Mammary epithelial cell (primary cell): ENCODE measurements at regions of chr9 and their contacts with region 1.

Region 1: GRCh38 chr9:69932901-69933300 is 110.7 kb upstream of the MAMDC2 start:
- DNase-seq: no peak
- H3K4me3 ChIP-seq: no peak overlapping the region
- H3K27ac ChIP-seq: no peak overlapping the region
- H3K4me1 ChIP-seq: peaks cover 10% of the 10 kb centered on the region
- H3K27me3 ChIP-seq: no peaks in the 10 kb centered on the region
- CTCF ChIP-seq: peak; percentile 35 to 50

Region 2: DNA sequence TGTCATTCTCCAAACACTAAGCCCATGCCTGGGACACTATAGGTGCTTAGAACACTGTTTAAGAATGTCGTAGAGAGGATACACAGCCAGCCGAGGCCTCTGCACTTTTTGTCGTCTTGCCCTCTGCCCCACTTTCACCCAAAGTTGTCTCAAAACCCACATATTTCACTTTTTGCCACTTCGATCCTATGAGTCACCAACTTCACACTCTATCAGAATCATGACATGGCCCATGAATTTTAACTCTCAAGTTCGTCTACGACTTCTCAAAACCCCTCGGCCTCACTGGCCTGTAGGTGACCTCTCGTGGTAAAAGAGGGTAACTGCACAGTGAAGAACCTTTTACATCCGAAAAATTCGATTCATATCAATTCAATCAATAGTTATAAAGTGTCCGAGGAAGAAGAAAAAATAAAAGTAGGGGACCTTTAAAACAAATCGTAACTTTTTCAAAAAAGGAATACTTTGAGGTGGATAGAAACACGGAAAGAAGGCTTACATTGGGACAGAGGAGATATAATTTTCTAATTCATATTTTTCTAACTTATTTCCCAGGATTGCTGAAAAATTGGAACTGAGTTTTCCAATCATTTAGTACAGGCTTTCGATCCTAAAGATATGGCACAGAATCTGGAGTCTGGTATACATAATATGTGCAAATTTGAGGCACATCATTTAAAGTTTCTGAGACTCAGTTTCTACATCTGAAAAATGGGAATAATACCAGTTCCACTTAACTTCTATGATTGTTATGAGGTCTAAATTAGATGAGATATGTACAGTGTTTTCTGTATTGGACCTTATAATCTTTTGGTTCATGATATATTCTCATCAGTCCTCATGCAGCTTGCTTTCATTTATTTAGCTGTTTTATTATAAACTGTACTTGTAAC is 383.3 kb before region 1 on chr9:
- CTCF ChIA-PET with region 1: no interaction called
- dilution Hi-C with region 1: no loop called
- in situ Hi-C with region 1: no loop called
- intact Hi-C with region 1: loop called (anchors 5 kb)
- DNase-seq: no peak
- H3K4me3 ChIP-seq: no peak overlapping the region
- H3K27ac ChIP-seq: no peak overlapping the region
- H3K4me1 ChIP-seq: no peaks in the 10 kb centered on the region
- H3K27me3 ChIP-seq: peaks cover 12% of the 10 kb centered on the region
- CTCF ChIP-seq: peak; percentile 72 to 80

Region 3: GRCh38 chr9:69672596-69673310 is 260.1 kb before region 1 on chr9:
- CTCF ChIA-PET with region 1: no interaction called
- dilution Hi-C with region 1: no loop called
- in situ Hi-C with region 1: no loop called
- intact Hi-C with region 1: loop called (anchors 5 kb)
- DNase-seq: peak; percentile 79
- H3K4me3 ChIP-seq: peak overlapping the region; percentile 47 to 71 (median 69)
- H3K27ac ChIP-seq: no peak overlapping the region
- H3K4me1 ChIP-seq: peaks cover 33% of the 10 kb centered on the region
- H3K27me3 ChIP-seq: no peaks in the 10 kb centered on the region
- CTCF ChIP-seq: peak; percentile 70 to 85

Region 4: DNA sequence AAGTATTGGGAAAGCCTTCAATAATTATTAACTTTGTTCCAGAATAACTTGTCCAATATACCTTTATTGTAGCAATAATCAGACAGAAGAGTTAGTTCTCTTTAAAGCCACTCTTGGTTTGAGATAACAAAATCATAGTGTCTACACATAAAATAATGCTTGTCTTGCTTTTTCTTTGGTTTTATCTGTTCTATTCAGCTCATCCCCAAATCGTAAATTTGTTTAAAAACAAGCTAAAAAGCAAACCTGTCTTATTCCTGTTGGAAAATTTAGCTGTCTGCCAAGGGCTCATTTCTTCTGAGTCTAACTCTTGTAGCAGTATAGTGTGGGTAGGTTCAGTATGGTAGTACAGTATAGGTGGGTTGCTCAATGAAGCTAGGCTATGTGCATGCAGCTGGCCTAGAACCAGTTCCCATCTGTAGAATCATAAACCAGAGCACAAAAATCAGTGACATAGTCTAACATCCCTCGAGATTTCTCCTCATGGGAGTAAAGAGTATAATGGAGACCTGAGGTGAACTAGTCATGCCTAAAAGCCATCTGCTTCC is 242.8 kb before region 1 on chr9:
- CTCF ChIA-PET with region 1: no interaction called
- dilution Hi-C with region 1: no loop called
- in situ Hi-C with region 1: no loop called
- intact Hi-C with region 1: no loop called
- DNase-seq: no peak
- H3K4me3 ChIP-seq: no peak overlapping the region
- H3K27ac ChIP-seq: no peak overlapping the region
- H3K4me1 ChIP-seq: no peaks in the 10 kb centered on the region
- H3K27me3 ChIP-seq: no peaks in the 10 kb centered on the region
- CTCF ChIP-seq: no peak

Region 5: GRCh38 chr9:69809304-69809863 is 123.5 kb before region 1 on chr9:
- CTCF ChIA-PET with region 1: interaction called, 5 read pairs
- dilution Hi-C with region 1: no loop called
- in situ Hi-C with region 1: loop called in 1 of 2 experiments (anchors 10 kb)
- intact Hi-C with region 1: loop called (anchors 1 kb)
- DNase-seq: peak; percentile 17
- H3K4me3 ChIP-seq: no peak overlapping the region
- H3K27ac ChIP-seq: no peak overlapping the region
- H3K4me1 ChIP-seq: no peaks in the 10 kb centered on the region
- H3K27me3 ChIP-seq: no peaks in the 10 kb centered on the region
- CTCF ChIP-seq: peak; percentile 38 to 41

Region 6: DNA sequence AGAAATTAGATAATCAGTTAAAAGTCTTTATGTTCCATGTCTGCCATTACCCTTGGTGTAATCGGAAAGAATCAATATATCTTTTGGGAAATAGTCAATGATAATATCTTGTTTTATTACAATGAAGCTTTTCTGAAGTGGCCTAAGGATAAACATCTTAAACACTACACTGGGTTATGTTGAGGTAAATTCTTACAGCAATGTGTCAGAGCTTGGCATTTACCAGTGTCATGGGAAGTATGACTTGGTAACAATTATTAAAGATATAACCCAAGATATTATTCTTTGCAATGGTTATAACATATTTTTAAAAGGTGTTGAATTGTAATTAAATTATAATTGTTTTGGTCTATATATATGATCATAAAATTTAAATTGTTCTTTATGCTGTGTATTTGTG is 27.6 kb before region 1 on chr9:
- CTCF ChIA-PET with region 1: no interaction called
- dilution Hi-C with region 1: no loop called
- in situ Hi-C with region 1: no loop called
- intact Hi-C with region 1: no loop called
- DNase-seq: peak; percentile 45
- H3K4me3 ChIP-seq: no peak overlapping the region
- H3K27ac ChIP-seq: peak overlapping the region; percentile 22
- H3K4me1 ChIP-seq: peaks cover 14% of the 10 kb centered on the region
- H3K27me3 ChIP-seq: no peaks in the 10 kb centered on the region
- CTCF ChIP-seq: no peak

Region 7: DNA sequence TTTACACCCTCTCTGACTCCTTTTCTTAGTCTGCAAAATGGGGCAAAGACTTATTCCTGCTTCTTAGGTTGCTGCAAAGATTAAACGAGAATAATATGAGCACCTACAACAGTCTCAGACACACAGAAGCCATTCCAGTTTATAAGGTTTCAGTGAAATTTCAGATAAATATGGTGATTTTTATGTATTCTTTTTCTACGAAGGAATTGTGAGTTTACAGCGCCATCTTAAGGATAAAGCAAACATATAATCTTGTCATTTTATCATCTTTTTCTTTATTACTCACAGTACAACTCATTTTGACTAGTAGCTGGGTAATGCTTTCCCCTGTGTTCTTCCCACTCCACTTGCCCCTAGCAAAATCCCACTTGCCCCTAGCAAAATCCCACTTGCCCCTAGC is 296.7 kb after region 1 on chr9:
- CTCF ChIA-PET with region 1: no interaction called
- dilution Hi-C with region 1: no loop called
- in situ Hi-C with region 1: no loop called
- intact Hi-C with region 1: loop called (anchors 5 kb)
- DNase-seq: peak; percentile 13
- H3K4me3 ChIP-seq: no peak overlapping the region
- H3K27ac ChIP-seq: no peak overlapping the region
- H3K4me1 ChIP-seq: no peaks in the 10 kb centered on the region
- H3K27me3 ChIP-seq: no peaks in the 10 kb centered on the region
- CTCF ChIP-seq: peak; percentile 40